Activated naive CD4-positive, alpha-beta T cell treated with anti-CD3 and anti-CD28 coated beads for 36 hours (primary cell): ENCODE measurements at regions of chr13 and their contacts with region 1.

Region 1: DNA sequence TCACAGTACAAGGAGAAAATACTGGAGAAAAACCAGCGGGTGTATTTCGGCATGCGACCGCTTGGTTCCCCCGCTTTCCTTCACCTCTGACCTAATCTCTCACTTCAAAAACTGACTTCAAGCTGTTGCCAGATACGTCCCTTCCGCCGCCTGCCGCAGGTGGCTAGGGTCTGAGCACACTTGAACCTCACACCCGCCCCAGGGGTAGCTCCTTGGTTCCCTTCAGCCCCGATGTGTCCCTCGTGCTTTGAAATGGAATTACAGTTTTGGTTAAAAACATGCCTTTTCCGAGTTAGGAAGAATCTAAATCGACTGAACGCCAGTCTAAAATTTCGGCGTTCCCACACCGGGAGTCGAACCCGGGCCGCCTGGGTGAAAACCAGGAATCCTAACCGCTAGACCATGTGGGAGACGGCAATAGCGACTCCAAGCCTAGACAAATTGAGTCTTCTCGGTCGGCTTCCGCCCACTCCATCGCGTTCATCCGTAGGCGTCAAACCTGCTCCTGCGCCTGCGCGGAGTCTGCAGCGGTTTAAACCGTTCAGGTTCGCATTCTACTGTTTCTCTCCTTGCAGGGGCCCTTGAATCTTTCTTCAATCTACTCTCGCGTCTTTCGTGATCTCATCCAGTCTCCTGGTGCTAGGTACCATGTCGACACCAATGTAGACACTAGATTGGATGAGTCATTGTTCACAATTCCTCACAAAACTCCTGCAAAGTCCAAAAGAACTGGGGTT is 71.5 kb downstream of the NUFIP1 start:
- DNase-seq: peak; percentile 97
- H3K4me3 Mint-ChIP-seq: no peak overlapping the region
- H3K27ac Mint-ChIP-seq: no peak overlapping the region
- H3K4me1 Mint-ChIP-seq: peaks cover 3% of the 10 kb centered on the region
- H3K27me3 Mint-ChIP-seq: no peaks in the 10 kb centered on the region

Region 2: DNA sequence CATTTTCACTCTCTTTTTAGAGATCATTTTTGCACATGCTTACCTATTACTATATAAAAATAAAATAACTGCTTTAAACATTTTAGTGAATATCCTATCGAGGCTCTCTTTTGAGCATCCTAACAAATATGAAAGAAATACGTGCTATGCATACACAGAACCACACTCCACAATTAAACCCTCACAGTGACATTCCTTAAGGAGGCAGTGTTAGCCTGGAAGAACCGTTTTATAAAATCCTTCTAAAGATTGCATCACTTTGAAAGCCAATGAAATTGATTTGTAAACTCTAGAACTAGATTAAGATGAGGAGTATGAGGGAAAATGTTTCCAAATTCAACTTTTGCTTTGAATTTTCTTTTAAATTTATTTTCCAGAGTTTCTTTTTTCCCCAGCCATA is 1119.9 kb before region 1 on chr13:
- CTCF ChIA-PET with region 1: no interaction called
- intact Hi-C with region 1: loop called (anchors 2 kb)
- DNase-seq: no peak
- H3K4me3 Mint-ChIP-seq: no peak overlapping the region
- H3K27ac Mint-ChIP-seq: no peak overlapping the region
- H3K4me1 Mint-ChIP-seq: peaks cover 30% of the 10 kb centered on the region
- H3K27me3 Mint-ChIP-seq: peaks cover 22% of the 10 kb centered on the region

Region 3: DNA sequence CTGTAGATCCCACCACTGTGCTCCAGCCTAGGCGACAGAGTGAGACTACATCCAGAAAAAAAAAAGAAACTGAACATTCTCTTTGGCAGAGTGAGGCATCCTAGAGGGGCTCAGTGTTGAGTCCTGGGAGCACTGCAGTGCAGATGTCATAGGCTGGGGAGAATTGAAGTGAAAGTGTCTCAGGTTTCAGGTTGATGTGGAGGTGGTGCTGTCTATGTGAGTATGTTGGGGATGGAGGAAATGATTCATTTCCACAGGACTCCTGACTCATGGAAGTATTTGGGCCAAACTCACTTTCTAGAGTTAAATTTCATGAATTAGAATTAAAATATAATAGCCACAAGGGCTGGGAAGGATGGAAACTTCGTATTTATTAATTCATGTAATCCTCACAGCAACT is 207.2 kb before region 1 on chr13:
- CTCF ChIA-PET with region 1: no interaction called
- intact Hi-C with region 1: loop called (anchors 1 kb)
- DNase-seq: peak; percentile 53
- H3K4me3 Mint-ChIP-seq: no peak overlapping the region
- H3K27ac Mint-ChIP-seq: no peak overlapping the region
- H3K4me1 Mint-ChIP-seq: peaks cover 11% of the 10 kb centered on the region
- H3K27me3 Mint-ChIP-seq: peaks cover 4% of the 10 kb centered on the region

Region 4: GRCh38 chr13:44815623-44816022 is 102.1 kb before region 1 on chr13:
- CTCF ChIA-PET with region 1: no interaction called
- intact Hi-C with region 1: loop called (anchors 1 kb)
- DNase-seq: peak; percentile 66
- H3K4me3 Mint-ChIP-seq: no peak overlapping the region
- H3K27ac Mint-ChIP-seq: no peak overlapping the region
- H3K4me1 Mint-ChIP-seq: peaks cover 20% of the 10 kb centered on the region
- H3K27me3 Mint-ChIP-seq: peaks cover 17% of the 10 kb centered on the region

Region 5: GRCh38 chr13:44988973-44989817 is 71.4 kb after region 1 on chr13 and contains the starts of genes GPALPP1 and NUFIP1:
- CTCF ChIA-PET with region 1: no interaction called
- intact Hi-C with region 1: loop called (anchors 1 kb)
- DNase-seq: peak; percentile 98
- H3K4me3 Mint-ChIP-seq: peak within 1 kb of the TSS; percentile 98
- H3K27ac Mint-ChIP-seq: peak within 1 kb of the TSS; percentile 88
- H3K4me1 Mint-ChIP-seq: peaks cover 60% of the 10 kb centered on the region
- H3K27me3 Mint-ChIP-seq: no peaks in the 10 kb centered on the region
- total RNA-seq, gene GPALPP1: 25.0 to 26.9 TPM
- total RNA-seq, gene NUFIP1: 7.2 to 8.9 TPM

Region 6: GRCh38 chr13:45340926-45341750 is 423.4 kb after region 1 on chr13 and contains the start of gene TPT1:
- CTCF ChIA-PET with region 1: no interaction called
- intact Hi-C with region 1: loop called (anchors 1 kb)
- DNase-seq: peak; percentile 100
- H3K4me3 Mint-ChIP-seq: peak within 1 kb of the TSS; percentile 91
- H3K27ac Mint-ChIP-seq: peak within 1 kb of the TSS; percentile 99
- H3K4me1 Mint-ChIP-seq: peaks cover 43% of the 10 kb centered on the region
- H3K27me3 Mint-ChIP-seq: no peaks in the 10 kb centered on the region
- total RNA-seq, gene TPT1: 3,331 to 3,631 TPM

Region 7: DNA sequence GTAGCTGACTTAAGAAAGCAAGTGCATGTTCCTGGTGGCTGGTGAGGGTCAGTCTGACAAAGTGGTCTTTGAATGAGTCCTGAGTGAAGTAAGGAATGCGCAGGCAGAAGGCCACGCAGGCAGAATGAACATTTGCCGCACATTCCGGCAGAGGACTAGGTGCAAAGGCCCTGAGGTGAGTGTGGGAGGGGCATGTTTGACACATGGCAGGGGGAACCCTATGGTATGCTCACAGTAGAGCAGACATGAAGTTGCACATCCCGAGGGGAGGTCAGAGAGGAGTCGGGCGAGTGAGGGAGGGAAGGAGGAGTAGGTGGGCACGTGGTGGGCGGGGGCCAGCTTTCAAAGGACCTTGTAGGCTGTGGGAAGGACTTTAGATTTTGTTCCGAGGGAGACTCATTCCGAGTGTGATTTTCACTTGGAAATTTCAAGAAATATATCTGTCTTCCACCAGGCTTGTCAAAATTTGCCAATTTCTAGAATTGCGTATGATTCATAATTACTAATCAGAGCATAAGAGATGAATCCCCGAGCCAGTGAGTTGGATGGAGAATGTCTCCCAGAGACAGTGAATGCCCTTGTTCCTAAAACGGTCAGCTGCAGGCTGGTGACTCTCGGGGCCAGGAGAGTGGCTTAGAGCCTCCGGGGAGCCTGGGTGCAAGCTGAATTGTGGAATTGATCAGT is 657.5 kb after region 1 on chr13:
- CTCF ChIA-PET with region 1: no interaction called
- intact Hi-C with region 1: no loop called
- DNase-seq: no peak
- H3K4me3 Mint-ChIP-seq: no peak overlapping the region
- H3K27ac Mint-ChIP-seq: no peak overlapping the region
- H3K4me1 Mint-ChIP-seq: no peaks in the 10 kb centered on the region
- H3K27me3 Mint-ChIP-seq: no peaks in the 10 kb centered on the region